ENCODE measurements at regions of chr1 and their contacts with region 1.

Region 1: DNA sequence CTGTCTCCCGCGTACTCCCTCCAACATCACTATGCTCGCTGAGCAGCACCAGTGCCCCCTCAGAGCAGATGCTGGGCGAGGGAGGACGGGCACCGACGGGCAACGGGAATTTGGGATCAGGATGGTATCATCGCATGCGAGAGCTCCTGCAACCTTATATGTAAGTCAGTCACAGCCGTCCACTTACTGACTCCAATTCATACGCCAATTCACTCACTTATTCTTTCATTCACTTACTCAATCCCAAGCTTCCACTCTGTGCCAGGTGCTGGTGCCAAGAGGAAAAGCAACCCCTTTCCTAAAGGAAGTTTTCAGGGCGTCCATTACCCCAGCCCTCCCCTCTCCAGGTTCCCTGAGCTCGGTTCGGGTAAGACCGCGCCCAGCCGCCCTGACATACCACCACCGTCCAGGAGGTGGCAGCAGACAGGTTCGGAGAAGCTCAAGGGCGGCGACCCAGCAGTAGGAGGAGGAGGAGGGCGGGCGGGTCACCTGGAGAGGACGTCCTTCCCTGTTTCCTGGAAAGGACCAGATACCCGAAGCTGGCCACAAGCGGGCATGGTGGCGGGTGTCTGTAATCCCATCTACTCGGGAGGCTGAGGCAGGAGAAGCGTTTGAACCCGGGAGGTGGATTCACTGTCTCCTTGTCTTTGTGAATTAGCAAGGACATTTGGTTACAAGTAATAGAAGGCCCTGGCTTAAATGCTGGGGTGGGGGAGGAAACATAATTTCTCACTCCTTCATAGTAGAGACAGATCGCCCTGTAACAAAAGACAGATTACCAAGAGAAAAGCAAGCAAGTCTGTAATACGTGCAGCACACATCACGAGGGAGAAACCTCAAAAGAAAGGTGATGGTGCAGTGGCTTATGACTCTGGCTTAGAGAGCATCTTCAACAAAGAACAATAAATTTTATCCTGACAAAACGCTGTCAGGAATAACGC is 7.6 kb upstream of the IL22RA1 start:
- DNase-seq: peak; percentile 76
- H3K4me3 Mint-ChIP-seq: peak overlapping the region; percentile 67
- H3K27ac Mint-ChIP-seq: no peak overlapping the region
- H3K4me1 Mint-ChIP-seq: peaks cover 14% of the 10 kb centered on the region
- H3K27me3 Mint-ChIP-seq: peaks cover 20% of the 10 kb centered on the region

Region 2: DNA sequence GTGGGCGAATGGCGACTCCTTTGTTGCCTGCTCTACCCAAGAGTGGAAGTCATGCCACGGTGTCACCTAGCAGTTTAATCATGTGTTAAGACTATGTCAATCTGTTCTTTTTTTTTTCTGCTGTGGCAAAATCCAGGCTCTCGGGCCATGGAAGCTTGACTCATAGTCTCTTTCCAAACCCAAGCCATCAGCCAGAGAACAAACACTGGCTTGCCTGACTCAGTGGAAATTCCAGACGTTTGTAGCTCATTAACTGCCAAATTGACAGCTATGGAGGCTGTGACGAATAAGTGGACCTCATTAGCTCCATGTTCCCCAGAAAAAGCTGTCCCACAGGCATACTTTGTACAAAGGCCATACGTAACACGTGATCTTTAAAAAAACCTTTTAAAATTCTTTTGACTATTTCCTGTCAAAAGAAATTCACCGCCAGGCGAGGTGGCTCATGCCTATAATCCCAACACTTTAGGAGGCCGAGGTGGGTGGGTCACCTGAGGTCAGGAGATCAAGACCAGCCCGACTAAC is 198.9 kb before region 1 on chr1:
- intact Hi-C with region 1: no loop called
- DNase-seq: no peak
- H3K4me3 Mint-ChIP-seq: no peak overlapping the region
- H3K27ac Mint-ChIP-seq: no peak overlapping the region
- H3K4me1 Mint-ChIP-seq: peaks cover 14% of the 10 kb centered on the region
- H3K27me3 Mint-ChIP-seq: peaks cover 9% of the 10 kb centered on the region

Region 3: GRCh38 chr1:24191860-24192259 is 41.4 kb after region 1 on chr1:
- intact Hi-C with region 1: loop called (anchors 2 kb)
- DNase-seq: peak; percentile 33
- H3K4me3 Mint-ChIP-seq: no peak overlapping the region
- H3K27ac Mint-ChIP-seq: peak overlapping the region; percentile 83
- H3K4me1 Mint-ChIP-seq: peaks cover 50% of the 10 kb centered on the region
- H3K27me3 Mint-ChIP-seq: no peaks in the 10 kb centered on the region

Region 4: DNA sequence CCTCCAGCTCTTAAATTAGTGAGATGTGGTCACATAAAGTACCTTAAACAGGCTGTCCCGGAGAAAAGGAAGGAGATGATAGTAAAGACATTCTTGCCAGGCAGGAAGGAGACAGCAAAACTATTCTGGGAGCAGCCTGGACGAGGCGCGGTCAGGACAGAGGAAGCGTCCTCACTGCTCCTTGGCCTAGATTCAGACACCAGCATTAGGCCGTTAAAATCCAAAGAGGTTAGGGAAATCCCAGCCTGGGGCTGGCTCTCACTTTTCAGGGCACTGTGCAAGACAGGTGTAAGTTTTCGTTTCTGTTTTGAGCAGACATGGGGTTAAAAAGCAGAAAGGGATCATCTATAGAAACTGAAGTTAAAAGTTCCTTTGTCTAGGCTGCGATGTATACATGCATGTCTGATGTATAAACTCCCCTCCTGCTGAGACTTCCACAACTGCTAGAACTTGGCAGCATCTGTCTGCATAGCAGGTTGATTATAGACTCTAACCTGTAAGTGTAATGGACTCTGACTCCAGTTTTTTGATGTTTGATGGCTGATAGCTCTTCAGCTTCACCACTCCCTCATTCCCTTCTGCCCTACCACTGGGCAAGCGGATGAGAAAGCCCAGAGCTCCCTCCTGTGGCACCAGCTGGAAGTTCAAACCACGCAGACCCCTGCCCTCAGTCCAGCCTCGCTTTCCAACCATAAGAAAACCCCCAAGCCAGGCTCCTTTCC is 241.5 kb after region 1 on chr1:
- intact Hi-C with region 1: loop called (anchors 1 kb)
- DNase-seq: peak; percentile 51
- H3K4me3 Mint-ChIP-seq: no peak overlapping the region
- H3K27ac Mint-ChIP-seq: peak overlapping the region; percentile 60
- H3K4me1 Mint-ChIP-seq: peaks cover 15% of the 10 kb centered on the region
- H3K27me3 Mint-ChIP-seq: no peaks in the 10 kb centered on the region

Measured in activated T-helper 2 cell treated with anti-CD3 and anti-CD28 coated beads, Interferon-gamma antibody, Interleukin-2, Interleukin-4, amounts not matched to agents 10 μg/mL and 5 μg/mL and 100 μg/mL, durations not matched to agents 14 hours and 24 hours and 36 hours (primary cell).